ENCODE measurements at regions of chr20 and their contacts with region 1.

Region 1: GRCh38 chr20:32743237-32744112 is at the start of gene COMMD7:
- DNase-seq: peak; percentile 83
- H3K4me3 Mint-ChIP-seq: peak within 1 kb of the TSS; percentile 88
- H3K27ac Mint-ChIP-seq: peak within 1 kb of the TSS; percentile 100
- H3K4me1 Mint-ChIP-seq: peaks cover 46% of the 10 kb centered on the region
- H3K27me3 Mint-ChIP-seq: no peaks in the 10 kb centered on the region
- total RNA-seq, gene COMMD7: 61.7 to 62.6 TPM

Region 2: DNA sequence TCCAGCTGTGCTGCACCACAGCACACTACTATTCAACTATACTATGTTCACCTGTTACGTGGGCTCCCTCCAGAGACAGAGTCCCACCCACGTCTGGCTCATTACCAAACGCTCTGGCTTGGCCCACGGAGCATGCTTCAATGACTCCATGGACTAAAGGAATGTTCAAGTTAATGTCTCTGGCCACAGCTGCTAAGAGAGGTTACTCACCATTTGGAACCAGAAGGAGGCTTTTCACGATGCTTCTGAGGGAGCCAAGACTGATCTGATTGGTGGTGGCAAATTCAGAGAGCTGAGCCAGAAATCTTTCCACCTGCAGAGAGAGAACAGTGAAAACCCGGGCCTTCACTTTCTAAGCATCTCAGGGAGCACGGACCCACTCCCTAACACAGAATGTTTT is 15.8 kb before region 1 on chr20:
- CTCF ChIA-PET with region 1: no interaction called
- POLR2A ChIA-PET with region 1: interaction called, 10 read pairs
- DNase-seq: no peak
- H3K4me3 Mint-ChIP-seq: no peak overlapping the region
- H3K27ac Mint-ChIP-seq: no peak overlapping the region
- H3K4me1 Mint-ChIP-seq: peaks cover 13% of the 10 kb centered on the region
- H3K27me3 Mint-ChIP-seq: no peaks in the 10 kb centered on the region

Region 3: GRCh38 chr20:32762149-32762753 is 18.8 kb after region 1 on chr20 and contains the start of gene DNMT3B:
- CTCF ChIA-PET with region 1: interaction called, 6 read pairs
- POLR2A ChIA-PET with region 1: interaction called, 31 read pairs
- DNase-seq: peak; percentile 77
- H3K4me3 Mint-ChIP-seq: peak within 1 kb of the TSS; percentile 81
- H3K27ac Mint-ChIP-seq: peak within 1 kb of the TSS; percentile 15
- H3K4me1 Mint-ChIP-seq: peaks cover 15% of the 10 kb centered on the region
- H3K27me3 Mint-ChIP-seq: peaks cover 16% of the 10 kb centered on the region
- total RNA-seq, gene DNMT3B: 2.2 to 2.4 TPM

Region 4: DNA sequence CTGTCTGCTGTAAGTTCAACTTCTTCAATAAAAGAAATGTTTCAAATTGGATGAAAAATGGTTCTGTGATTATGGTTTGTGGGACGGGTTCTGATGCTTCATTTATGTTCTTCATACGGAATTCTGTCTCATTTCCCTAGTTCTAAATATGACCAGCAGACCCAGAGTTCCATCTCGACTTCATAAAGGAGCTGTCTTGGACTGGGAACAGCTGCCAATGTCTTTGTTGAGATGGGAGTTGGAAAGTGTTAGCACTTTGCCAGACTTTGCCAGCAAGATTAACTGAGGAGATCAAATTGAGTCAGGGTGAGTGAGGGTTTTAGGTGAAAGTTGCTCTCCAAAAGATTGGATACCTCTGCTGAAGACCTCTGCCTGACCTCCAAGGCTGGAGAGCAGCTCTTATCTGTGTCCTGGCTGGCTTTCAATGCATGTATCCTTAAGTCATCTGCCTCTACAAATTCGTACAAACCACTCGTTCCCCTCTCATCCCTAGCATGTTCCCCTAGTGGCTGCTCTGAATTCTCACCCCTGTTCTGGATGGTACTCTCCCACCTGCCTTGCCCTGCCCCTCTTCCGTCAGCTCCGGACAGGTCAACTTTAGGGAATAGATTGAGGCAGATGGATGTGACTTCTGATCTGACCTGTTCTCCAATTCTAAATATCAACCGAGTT is 115.4 kb after region 1 on chr20 and contains the start of gene EFCAB8:
- CTCF ChIA-PET with region 1: no interaction called
- POLR2A ChIA-PET with region 1: no interaction called
- DNase-seq: no peak
- H3K4me3 Mint-ChIP-seq: no peak within 1 kb of the TSS
- H3K27ac Mint-ChIP-seq: no peak within 1 kb of the TSS
- H3K4me1 Mint-ChIP-seq: peaks cover 17% of the 10 kb centered on the region
- H3K27me3 Mint-ChIP-seq: no peaks in the 10 kb centered on the region
- total RNA-seq, gene EFCAB8: 0.25 to 0.55 TPM